ENCODE measurements at regions of chr9 and their contacts with region 1.

Region 1: DNA sequence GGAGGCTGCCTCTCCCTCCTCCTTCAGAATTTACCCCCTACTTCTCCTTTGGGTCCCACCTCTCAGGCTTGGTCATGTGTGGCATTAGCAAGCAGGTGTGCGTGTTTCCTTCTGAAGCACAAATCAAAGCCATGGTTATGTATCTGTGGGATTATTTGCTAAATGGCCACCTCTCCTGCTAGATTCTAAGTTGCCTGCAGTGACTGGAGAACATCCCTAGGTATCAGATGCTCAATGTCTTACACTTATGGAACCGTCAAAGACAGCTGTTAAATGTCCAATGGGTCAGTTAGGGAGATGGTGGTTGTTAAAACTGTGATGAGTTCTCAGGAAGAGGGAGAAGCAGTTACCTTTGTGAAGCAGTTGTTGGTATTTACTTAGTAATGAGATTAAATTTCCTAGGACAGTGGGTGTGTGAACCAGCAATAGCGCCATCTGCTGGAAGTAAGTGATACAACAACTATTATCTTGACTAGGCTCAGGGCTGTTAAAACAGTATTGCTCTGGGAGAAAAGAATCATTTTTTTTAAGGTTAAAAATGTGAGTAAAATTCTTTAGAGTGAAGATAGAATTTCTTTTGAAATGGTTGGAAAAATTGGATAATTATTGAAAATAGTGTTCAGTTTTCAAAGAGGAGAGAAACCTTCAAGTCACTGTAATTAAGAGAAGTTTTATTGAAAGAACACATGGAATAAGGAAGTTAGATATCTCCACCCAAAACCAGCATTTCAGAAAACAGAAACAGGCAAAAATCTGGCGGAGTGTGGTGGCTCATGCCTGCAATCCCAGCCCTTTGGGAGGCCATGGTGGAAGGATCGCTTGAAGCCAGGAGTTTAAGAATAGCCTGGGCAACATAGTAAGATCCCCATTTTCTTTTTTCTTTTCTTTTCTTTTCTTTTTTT is 71.3 kb downstream of the TMC1 start:
- DNase-seq: no peak

Region 2: GRCh38 chr9:72280913-72281500 is 311.7 kb before region 1 on chr9:
- intact Hi-C with region 1: loop called (anchors 1 kb)
- DNase-seq: peak; percentile 87

Region 3: GRCh38 chr9:72292256-72292682 is 300.5 kb before region 1 on chr9:
- intact Hi-C with region 1: loop called (anchors 1 kb)
- DNase-seq: no peak

Region 4: GRCh38 chr9:72364679-72365524 is 227.9 kb before region 1 on chr9 and contains the start of gene ZFAND5:
- intact Hi-C with region 1: loop called (anchors 5 kb)
- DNase-seq: peak; percentile 99
- total RNA-seq, gene ZFAND5: 188 TPM

Region 5: DNA sequence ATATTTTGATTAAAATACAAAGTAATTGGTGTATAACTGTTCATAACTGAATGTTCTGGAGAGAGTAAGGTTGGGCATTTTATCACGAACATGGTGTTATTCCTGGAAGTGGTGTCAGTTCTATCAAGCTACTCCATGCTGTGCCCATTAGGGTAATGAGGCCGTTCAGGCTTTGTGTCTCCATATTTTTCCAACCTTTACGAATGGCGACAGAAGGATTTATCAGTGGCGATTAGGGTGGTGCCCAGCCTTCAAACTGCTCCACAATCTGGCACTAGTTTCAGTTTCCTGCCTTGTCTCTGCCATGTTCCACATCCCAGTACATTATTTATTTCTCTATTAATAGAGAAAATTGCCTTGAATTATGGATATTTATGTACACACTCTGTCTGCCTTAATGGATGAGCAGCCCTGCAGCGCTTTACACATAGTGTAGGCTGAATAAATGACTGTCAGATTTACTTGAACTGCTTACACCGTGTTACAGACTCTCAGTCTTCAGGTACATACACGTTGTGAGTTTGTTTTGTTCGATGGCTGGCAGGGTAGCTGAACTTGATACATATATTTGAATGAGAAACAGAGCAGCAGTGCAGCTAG is 95.2 kb before region 1 on chr9:
- intact Hi-C with region 1: no loop called
- DNase-seq: no peak

Region 6: DNA sequence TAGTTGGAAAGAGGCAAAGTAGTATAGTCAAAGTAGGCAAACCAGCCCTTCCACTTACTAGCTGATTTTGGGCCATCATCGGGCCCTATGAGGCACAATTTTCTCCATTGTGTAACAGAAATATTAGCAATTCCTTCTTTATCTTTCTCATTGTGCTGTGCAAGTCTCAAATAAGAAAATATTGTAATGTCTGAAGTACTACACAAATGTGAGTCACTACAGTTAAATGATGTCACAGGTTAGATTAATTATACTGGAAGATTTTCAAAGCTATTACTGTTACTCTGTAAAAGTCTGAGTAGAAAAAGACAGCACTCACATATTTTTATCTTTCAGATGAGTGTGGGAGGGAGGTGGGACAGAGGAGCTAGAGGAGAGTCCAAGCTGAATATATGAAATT is 83.7 kb before region 1 on chr9:
- intact Hi-C with region 1: no loop called
- DNase-seq: no peak

Region 7: GRCh38 chr9:72526901-72527800 is 65.6 kb before region 1 on chr9:
- intact Hi-C with region 1: loop called (anchors 5 kb)
- DNase-seq: no peak

Region 8: GRCh38 chr9:72755836-72756235 is 163.1 kb after region 1 on chr9:
- intact Hi-C with region 1: no loop called
- DNase-seq: no peak

Measured in cardiac septum (tissue), 1 donor.